ENCODE measurements at regions of chr19 and their contacts with region 1.

Region 1: DNA sequence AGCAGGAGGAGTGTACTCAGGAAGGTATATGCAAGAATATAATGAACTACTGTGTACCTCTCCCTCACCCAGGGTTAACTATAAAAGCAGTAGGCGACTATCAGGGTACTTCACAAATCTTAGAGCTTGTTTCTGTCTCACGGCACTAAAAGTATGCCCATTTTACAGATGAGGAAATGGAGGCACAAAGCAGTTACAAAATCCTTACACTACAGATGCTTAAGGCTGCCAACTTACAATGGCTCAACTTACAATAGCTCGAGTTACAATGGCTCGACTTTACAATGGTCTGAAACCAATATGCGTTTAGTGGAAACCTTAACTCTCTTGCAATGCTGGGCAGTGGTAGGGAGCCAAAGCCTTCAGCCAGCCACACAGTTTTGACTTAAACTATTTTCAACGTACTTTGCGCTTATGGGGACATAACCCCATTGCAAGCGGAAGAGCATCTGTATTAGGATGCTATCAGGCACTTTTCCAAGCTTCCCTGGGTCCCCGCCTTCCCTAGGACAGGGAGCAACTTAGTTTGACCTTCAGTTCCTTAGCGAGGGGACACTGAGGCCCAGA is 4.1 kb downstream of the FCER2 start:
- DNase-seq: no peak
- ATAC-seq: no peak
- H3K4me3 ChIP-seq: no peak overlapping the region
- H3K4me3 Mint-ChIP-seq: no peak overlapping the region
- H3K27ac ChIP-seq: no peak overlapping the region
- H3K27ac Mint-ChIP-seq: no peak overlapping the region
- H3K4me1 ChIP-seq: peaks cover 4% of the 10 kb centered on the region
- H3K4me1 Mint-ChIP-seq: peaks cover 13% of the 10 kb centered on the region
- H3K27me3 ChIP-seq: peaks cover 0 to 4% of the 10 kb centered on the region in 2 experiments
- H3K27me3 Mint-ChIP-seq: peaks cover 8% of the 10 kb centered on the region
- CTCF ChIP-seq: no peak

Region 2: GRCh38 chr19:7663706-7664105 is 34.1 kb before region 1 on chr19:
- CTCF ChIA-PET with region 1: no interaction called
- POLR2A ChIA-PET with region 1: no interaction called
- intact Hi-C with region 1: loop called in 1 of 2 experiments (anchors 2 kb)
- DNase-seq: no peak
- ATAC-seq: no peak
- H3K4me3 ChIP-seq: no peak overlapping the region
- H3K4me3 Mint-ChIP-seq: no peak overlapping the region
- H3K27ac ChIP-seq: no peak overlapping the region
- H3K27ac Mint-ChIP-seq: no peak overlapping the region
- H3K4me1 ChIP-seq: peaks cover 2% of the 10 kb centered on the region
- H3K4me1 Mint-ChIP-seq: peaks cover 2% of the 10 kb centered on the region
- H3K27me3 ChIP-seq: peaks cover 0 to 3% of the 10 kb centered on the region in 2 experiments
- H3K27me3 Mint-ChIP-seq: peaks cover 12% of the 10 kb centered on the region
- CTCF ChIP-seq: no peak

Measured in CD8-positive, alpha-beta T cell (primary cell).